Lower leg skin (tissue), 4 donors: ENCODE measurements at regions of chr2 and their contacts with region 1.

Region 1: GRCh38 chr2:177489719-177490301 is 97.2 kb downstream of the AGPS start:
- DNase-seq: no peak
- H3K4me3 ChIP-seq: no peak overlapping the region
- CTCF ChIP-seq: no peak
- POLR2A ChIP-seq: no peak

Region 2: DNA sequence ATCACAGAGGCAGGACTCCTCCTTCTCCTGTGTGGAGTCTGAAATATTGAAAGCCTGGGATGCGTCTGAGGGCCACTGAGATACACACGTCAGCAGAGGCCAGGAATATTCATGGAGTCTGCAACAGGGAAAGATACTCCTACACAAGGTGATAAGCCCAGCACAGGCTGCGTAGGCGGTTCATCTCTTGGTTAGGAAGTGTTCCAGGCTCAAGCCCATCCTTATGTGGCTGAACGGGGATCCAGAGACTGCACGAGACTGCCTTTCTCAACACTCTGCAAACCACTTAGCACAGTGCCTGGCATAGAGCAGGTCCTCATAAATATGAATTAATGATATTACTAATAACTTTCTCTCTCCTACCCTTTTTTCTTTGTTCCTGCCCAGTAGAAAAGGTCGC is 126.5 kb before region 1 on chr2:
- intact Hi-C with region 1: no loop called
- DNase-seq: no peak
- H3K4me3 ChIP-seq: no peak overlapping the region
- CTCF ChIP-seq: no peak
- POLR2A ChIP-seq: no peak

Region 3: DNA sequence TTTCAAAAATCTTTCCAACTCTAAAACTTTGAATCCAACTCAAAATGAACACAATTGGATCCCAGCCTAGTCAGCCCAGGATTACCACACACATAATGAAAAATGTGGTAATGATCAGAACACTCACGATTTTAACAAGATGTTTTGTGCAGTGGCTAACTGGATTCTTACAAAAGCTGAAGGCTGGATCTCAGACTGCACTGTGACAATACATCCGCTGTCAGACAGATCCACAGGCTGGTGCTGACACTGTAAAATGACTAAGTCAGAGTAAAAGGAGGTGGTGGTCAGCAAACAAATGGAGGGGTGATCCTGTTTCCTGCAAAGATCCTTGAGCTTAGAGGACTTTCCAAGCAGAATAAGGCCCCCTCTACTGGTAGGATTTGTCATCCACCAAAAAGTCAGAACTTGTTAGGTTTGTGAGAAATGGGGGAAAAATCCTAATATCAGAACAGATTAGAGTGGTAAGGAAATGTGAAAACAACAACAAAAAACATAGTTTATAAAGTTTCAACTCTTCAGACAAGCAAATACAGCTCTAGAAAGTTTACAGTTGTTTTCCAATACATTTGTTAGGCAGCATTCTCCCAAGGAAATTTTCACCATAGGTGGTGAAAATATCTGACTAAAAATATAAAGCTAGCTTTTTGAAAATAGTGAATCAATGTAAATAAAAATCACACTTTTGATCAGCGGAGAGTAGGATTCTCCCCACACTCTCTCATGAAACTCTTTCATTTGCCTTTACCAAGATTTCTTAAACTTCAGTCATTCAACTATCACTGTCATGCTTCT is 114.7 kb after region 1 on chr2:
- intact Hi-C with region 1: loop called (anchors 5 kb)
- DNase-seq: peak in 1 of 2 donors; percentile 21
- H3K4me3 ChIP-seq: no peak overlapping the region
- CTCF ChIP-seq: peak in 1 of 3 donors; percentile 5
- POLR2A ChIP-seq: no peak